ENCODE measurements at regions of chr3 and their contacts with region 1.

Region 1: GRCh38 chr3:192795021-192795420 is 67.7 kb upstream of the FGF12 start:
- DNase-seq: no peak

Region 2: DNA sequence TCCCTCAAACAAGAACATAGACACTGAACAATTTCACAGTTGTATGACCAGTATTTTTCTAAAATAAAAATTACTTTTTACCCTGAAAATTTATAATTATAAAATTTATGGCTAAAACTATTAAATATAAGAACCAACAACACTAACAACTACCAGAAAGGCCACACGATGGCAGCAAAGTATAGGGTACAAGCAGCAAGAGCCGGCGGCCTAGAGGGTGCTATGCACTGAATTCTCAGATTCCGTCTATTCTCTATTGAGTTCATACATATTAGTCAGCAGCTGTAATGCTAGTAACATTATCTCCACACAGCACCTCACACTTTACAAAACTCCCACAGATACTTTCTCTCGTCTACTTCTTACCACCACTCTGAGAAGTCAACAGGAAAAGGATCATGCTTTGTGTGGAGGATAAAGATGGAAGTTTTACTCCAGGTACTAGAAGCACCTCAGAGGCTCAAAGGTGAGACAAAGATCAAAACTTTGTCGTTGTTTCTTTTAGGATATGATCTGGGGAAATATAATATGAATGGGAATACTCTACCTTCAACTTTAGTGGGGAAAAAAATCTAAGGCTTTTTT is 228.2 kb before region 1 on chr3:
- in situ Hi-C with region 1: loop called (anchors 25 kb)
- DNase-seq: peak; percentile 87

Region 3: DNA sequence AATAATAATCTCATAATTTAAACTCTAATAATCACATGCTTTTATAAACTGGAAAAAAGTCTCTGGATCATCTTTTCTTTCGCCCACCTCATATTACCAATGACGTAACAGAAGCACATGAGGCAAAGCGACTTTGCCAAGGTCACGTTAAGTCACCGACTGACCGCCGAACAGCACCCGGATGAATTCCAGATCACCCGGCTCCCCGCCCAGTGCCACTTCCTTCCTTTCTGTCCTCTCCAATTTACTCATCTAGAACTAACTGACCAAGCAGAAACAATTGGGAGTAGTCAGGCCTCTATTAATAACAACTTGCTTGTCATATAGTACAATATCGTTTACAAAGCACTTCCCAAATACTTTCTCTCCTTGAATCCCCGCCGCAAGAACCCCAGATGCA is 88.7 kb before region 1 on chr3:
- in situ Hi-C with region 1: no loop called
- DNase-seq: no peak

Region 4: DNA sequence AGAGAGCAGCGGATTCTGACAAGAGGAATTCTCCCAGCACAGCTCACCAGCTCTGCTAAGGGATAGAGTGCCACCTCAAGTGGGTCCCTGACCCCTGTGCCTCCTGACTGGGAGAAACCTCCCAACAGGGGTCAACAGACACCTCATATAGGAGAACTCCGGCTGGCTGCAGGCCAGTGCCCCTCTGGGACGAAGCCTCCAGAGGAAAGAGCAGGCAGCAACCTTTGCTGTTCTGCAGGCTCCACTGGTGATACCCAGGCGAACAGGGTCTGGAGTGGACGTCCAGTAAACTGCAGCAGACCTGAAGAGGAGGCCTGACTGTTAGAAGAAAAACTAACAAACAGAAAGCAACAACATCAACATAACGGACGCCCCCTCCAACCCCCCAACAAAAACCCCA is 36.4 kb before region 1 on chr3:
- in situ Hi-C with region 1: no loop called
- DNase-seq: no peak

Region 5: DNA sequence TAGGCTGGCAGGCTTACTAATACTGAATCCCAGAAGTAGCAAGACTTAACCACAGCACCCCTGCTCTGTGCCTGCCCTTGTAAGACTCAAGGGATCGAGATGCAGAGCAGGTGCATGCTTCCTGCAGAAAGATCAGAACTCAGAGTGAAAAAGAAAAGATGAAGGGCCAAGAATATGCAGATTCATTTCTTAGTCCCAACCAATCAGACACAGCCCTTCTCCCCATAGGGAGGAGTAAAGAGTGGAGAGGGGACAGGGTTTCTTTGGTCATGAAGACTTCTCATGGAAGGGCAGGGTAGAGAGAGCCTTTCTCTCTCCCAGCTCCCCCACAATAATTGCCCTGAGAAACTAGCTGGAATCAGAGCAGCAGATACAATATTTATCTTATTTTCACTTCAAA is 228.2 kb after region 1 on chr3:
- in situ Hi-C with region 1: no loop called
- DNase-seq: no peak

Measured in G401 (cell line).